ENCODE measurements at regions of chr3 and their contacts with region 1.

Region 1: GRCh38 chr3:158790901-158791589 is 10.8 kb upstream of the MFSD1 start:
- DNase-seq: peak; percentile 48
- ATAC-seq: peak; percentile 65
- H3K4me3 Mint-ChIP-seq: peak overlapping the region; percentile 49
- H3K27ac Mint-ChIP-seq: no peak overlapping the region
- H3K4me1 Mint-ChIP-seq: peaks cover 3% of the 10 kb centered on the region
- H3K27me3 Mint-ChIP-seq: no peaks in the 10 kb centered on the region

Region 2: GRCh38 chr3:158644345-158644908 is 146.6 kb before region 1 on chr3 and contains the start of gene GFM1:
- CTCF ChIA-PET with region 1: interaction called, 11 read pairs
- POLR2A ChIA-PET with region 1: no interaction called
- DNase-seq: peak; percentile 93
- ATAC-seq: peak; percentile 94
- H3K4me3 Mint-ChIP-seq: peak within 1 kb of the TSS; percentile 97
- H3K27ac Mint-ChIP-seq: peak within 1 kb of the TSS; percentile 93
- H3K4me1 Mint-ChIP-seq: peaks cover 29% of the 10 kb centered on the region
- H3K27me3 Mint-ChIP-seq: no peaks in the 10 kb centered on the region
- total RNA-seq, gene GFM1: 40.4 to 45.0 TPM

Region 3: GRCh38 chr3:158718490-158719170 is 72.4 kb before region 1 on chr3:
- CTCF ChIA-PET with region 1: interaction called, 12 read pairs
- POLR2A ChIA-PET with region 1: no interaction called
- DNase-seq: no peak
- ATAC-seq: no peak
- H3K4me3 Mint-ChIP-seq: no peak overlapping the region
- H3K27ac Mint-ChIP-seq: no peak overlapping the region
- H3K4me1 Mint-ChIP-seq: peaks cover 12% of the 10 kb centered on the region
- H3K27me3 Mint-ChIP-seq: no peaks in the 10 kb centered on the region

Region 4: GRCh38 chr3:158801696-158802408 is 10.8 kb after region 1 on chr3 and contains the start of gene MFSD1:
- CTCF ChIA-PET with region 1: interaction called, 27 read pairs
- POLR2A ChIA-PET with region 1: no interaction called
- DNase-seq: peak; percentile 92
- ATAC-seq: peak; percentile 92
- H3K4me3 Mint-ChIP-seq: peak within 1 kb of the TSS; percentile 88
- H3K27ac Mint-ChIP-seq: peak within 1 kb of the TSS; percentile 86
- H3K4me1 Mint-ChIP-seq: peaks cover 24% of the 10 kb centered on the region
- H3K27me3 Mint-ChIP-seq: peaks cover 17% of the 10 kb centered on the region
- total RNA-seq, gene MFSD1: 22.2 to 24.1 TPM

Region 5: DNA sequence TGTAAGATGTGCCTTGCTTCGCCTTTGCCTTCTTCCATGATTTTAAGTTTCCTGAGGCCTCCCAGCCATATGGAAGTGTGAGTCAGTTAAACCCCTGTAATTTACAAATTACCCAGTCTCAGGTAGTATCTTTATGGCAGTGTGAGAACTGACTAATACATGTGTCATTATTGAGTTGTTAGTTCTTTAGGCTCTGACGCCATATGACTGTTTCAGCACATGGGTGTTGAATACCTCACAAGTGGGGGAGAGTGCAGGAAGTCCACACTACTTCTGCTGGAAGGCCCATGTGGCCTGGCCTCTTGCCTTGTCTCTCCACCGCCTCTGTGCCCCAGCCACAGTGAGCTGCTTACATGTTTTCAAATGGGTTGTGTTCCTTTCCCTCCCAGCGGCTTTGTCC is 39.3 kb after region 1 on chr3:
- CTCF ChIA-PET with region 1: no interaction called
- POLR2A ChIA-PET with region 1: no interaction called
- DNase-seq: no peak
- ATAC-seq: no peak
- H3K4me3 Mint-ChIP-seq: no peak overlapping the region
- H3K27ac Mint-ChIP-seq: no peak overlapping the region
- H3K4me1 Mint-ChIP-seq: no peaks in the 10 kb centered on the region
- H3K27me3 Mint-ChIP-seq: no peaks in the 10 kb centered on the region

Region 6: GRCh38 chr3:158896729-158897128 is 105.7 kb after region 1 on chr3:
- CTCF ChIA-PET with region 1: no interaction called
- POLR2A ChIA-PET with region 1: no interaction called
- DNase-seq: no peak
- ATAC-seq: no peak
- H3K4me3 Mint-ChIP-seq: no peak overlapping the region
- H3K27ac Mint-ChIP-seq: no peak overlapping the region
- H3K4me1 Mint-ChIP-seq: no peaks in the 10 kb centered on the region
- H3K27me3 Mint-ChIP-seq: no peaks in the 10 kb centered on the region

Region 7: GRCh38 chr3:159008401-159008800 is 217.4 kb after region 1 on chr3:
- CTCF ChIA-PET with region 1: no interaction called
- POLR2A ChIA-PET with region 1: no interaction called
- DNase-seq: no peak
- ATAC-seq: no peak
- H3K4me3 Mint-ChIP-seq: no peak overlapping the region
- H3K27ac Mint-ChIP-seq: no peak overlapping the region
- H3K4me1 Mint-ChIP-seq: no peaks in the 10 kb centered on the region
- H3K27me3 Mint-ChIP-seq: no peaks in the 10 kb centered on the region

Region 8: DNA sequence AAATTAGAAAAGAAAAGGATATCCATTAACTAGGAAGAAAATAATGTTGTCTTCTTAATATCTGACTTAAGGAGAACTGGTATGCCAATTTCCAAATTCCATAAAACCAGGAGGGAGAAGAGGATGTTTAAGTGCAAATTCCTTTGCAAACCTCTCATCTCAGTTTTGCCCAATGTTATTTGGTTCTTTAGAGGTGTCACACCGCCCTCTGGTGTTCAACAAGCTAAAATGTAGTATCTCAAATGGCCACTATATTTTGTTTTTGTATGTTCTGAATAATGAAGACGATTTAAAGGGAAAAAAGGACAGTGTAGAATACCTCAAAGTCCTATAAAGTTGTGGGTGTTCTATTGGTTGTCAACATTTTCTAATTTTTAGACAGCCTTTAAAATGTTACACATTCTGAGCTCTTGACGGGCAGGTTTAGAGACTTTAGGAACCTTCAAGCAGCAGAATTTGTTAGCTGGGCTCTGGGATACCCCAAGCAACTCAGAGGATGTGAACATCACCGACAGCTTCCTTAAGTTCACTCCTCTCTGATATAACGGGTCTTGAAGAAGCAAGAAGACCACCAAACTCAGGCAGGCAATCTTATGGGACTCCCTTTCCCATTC is 469.1 kb after region 1 on chr3:
- CTCF ChIA-PET with region 1: interaction called, 11 read pairs
- POLR2A ChIA-PET with region 1: no interaction called
- DNase-seq: peak; percentile 61
- ATAC-seq: no peak
- H3K4me3 Mint-ChIP-seq: no peak overlapping the region
- H3K27ac Mint-ChIP-seq: no peak overlapping the region
- H3K4me1 Mint-ChIP-seq: no peaks in the 10 kb centered on the region
- H3K27me3 Mint-ChIP-seq: peaks cover 2% of the 10 kb centered on the region

Measured in activated CD8-positive, alpha-beta T cell treated with anti-CD3 and anti-CD28 coated beads, Interleukin-2, amount 10 ng/mL, durations not matched to agents 7 days and 5 days (primary cell).